PC-9 (cell line): ENCODE measurements at regions of chr10 and their contacts with region 1.

Region 1: GRCh38 chr10:31490858-31491504 is 172.0 kb downstream of the ZEB1 start:
- DNase-seq: peak in 1 of 2 experiments; percentile 19
- H3K4me3 ChIP-seq: no peak overlapping the region
- H3K27ac ChIP-seq: no peak overlapping the region
- H3K4me1 ChIP-seq: no peaks in the 10 kb centered on the region
- H3K27me3 ChIP-seq: no peaks in the 10 kb centered on the region
- CTCF ChIP-seq: peak; percentile 68

Region 2: GRCh38 chr10:30687698-30688219 is 803.2 kb before region 1 on chr10:
- CTCF ChIA-PET with region 1: interaction called, 4 read pairs
- POLR2A ChIA-PET with region 1: no interaction called
- intact Hi-C with region 1: loop called (anchors 5 kb)
- DNase-seq: peak; percentile 38 to 80
- H3K4me3 ChIP-seq: no peak overlapping the region
- H3K27ac ChIP-seq: no peak overlapping the region
- H3K4me1 ChIP-seq: no peaks in the 10 kb centered on the region
- H3K27me3 ChIP-seq: no peaks in the 10 kb centered on the region
- CTCF ChIP-seq: peak; percentile 90